ENCODE measurements at regions of chr11 and their contacts with region 1.

Region 1: GRCh38 chr11:128039140-128040021 is 548.0 kb downstream of the ETS1 start:
- DNase-seq: peak; percentile 25 to 83 (median 74)
- ATAC-seq: peak; percentile 97
- H3K4me3 ChIP-seq: peak overlapping the region; percentile 38
- H3K4me3 Mint-ChIP-seq: peak overlapping the region in 9 of 10 donors; percentile 61 to 79 (median 70)
- H3K27ac ChIP-seq: peak overlapping the region; percentile 49
- H3K27ac Mint-ChIP-seq: peak overlapping the region in 8 of 9 donors; percentile 71 to 94 (median 90)
- H3K4me1 ChIP-seq: peaks cover 68 to 74% of the 10 kb centered on the region in 2 donors
- H3K4me1 Mint-ChIP-seq: peaks cover 25 to 56% (median 41%) of the 10 kb centered on the region in 7 donors
- H3K27me3 ChIP-seq: no peaks in the 10 kb centered on the region
- H3K27me3 Mint-ChIP-seq: peaks cover 0 to 3% (median 0%) of the 10 kb centered on the region in 5 donors

Region 2: GRCh38 chr11:127816962-127817361 is 222.4 kb before region 1 on chr11:
- CTCF ChIA-PET with region 1: no interaction called
- POLR2A ChIA-PET with region 1: no interaction called
- intact Hi-C with region 1: no loop called
- DNase-seq: no peak
- ATAC-seq: no peak
- H3K4me3 ChIP-seq: no peak overlapping the region
- H3K4me3 Mint-ChIP-seq: peak overlapping the region in 1 of 10 donors; percentile 11
- H3K27ac ChIP-seq: no peak overlapping the region
- H3K27ac Mint-ChIP-seq: no peak overlapping the region
- H3K4me1 ChIP-seq: no peaks in the 10 kb centered on the region
- H3K4me1 Mint-ChIP-seq: peaks cover 0 to 2% (median 0%) of the 10 kb centered on the region in 7 donors
- H3K27me3 ChIP-seq: no peaks in the 10 kb centered on the region
- H3K27me3 Mint-ChIP-seq: peaks cover 2 to 25% (median 7%) of the 10 kb centered on the region in 5 donors

Region 3: DNA sequence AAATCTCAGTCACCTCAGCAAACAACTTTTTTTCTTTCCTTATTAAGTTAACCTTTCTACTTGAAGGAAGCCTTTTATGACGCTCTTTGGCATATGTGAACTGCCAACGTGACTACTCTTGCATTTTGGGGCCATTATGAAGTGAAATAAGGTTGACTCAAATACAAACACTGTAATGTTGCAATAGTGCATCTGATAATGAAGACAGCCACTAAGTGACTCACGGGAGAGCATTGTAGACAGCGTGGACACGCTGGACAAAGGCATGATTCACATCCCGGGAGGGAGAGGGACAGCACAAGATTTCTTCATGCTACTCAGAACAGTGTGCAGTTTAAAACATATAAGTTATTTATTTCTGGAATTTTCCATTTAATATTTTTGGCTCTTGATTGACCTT is 12.8 kb before region 1 on chr11:
- CTCF ChIA-PET with region 1: interaction called, 10 read pairs
- POLR2A ChIA-PET with region 1: no interaction called
- intact Hi-C with region 1: loop called in 1 of 2 experiments (anchors 1 kb)
- DNase-seq: no peak
- ATAC-seq: peak; percentile 34
- H3K4me3 ChIP-seq: no peak overlapping the region
- H3K4me3 Mint-ChIP-seq: no peak overlapping the region
- H3K27ac ChIP-seq: no peak overlapping the region
- H3K27ac Mint-ChIP-seq: peak overlapping the region in 1 of 9 donors; percentile 12
- H3K4me1 ChIP-seq: peaks cover 0 to under 1% of the 10 kb centered on the region in 2 donors
- H3K4me1 Mint-ChIP-seq: peaks cover 0 to 5% (median 3%) of the 10 kb centered on the region in 7 donors
- H3K27me3 ChIP-seq: no peaks in the 10 kb centered on the region
- H3K27me3 Mint-ChIP-seq: peaks cover 0 to 37% (median 2%) of the 10 kb centered on the region in 5 donors

Region 4: GRCh38 chr11:128157423-128158298 is 118.3 kb after region 1 on chr11:
- CTCF ChIA-PET with region 1: interaction called, 53 read pairs
- POLR2A ChIA-PET with region 1: interaction called, 6 read pairs
- intact Hi-C with region 1: loop called (anchors 2 kb)
- DNase-seq: peak in 8 of 9 donors; percentile 44 to 82 (median 74)
- ATAC-seq: peak; percentile 96
- H3K4me3 ChIP-seq: peak overlapping the region; percentile 33
- H3K4me3 Mint-ChIP-seq: peak overlapping the region in 9 of 10 donors; percentile 64 to 87 (median 77)
- H3K27ac ChIP-seq: peak overlapping the region; percentile 4
- H3K27ac Mint-ChIP-seq: peak overlapping the region in 7 of 9 donors; percentile 4 to 86 (median 58)
- H3K4me1 ChIP-seq: no peaks in the 10 kb centered on the region
- H3K4me1 Mint-ChIP-seq: peaks cover 0 to 10% (median 4%) of the 10 kb centered on the region in 7 donors
- H3K27me3 ChIP-seq: no peaks in the 10 kb centered on the region
- H3K27me3 Mint-ChIP-seq: peaks cover 0 to 28% (median 0%) of the 10 kb centered on the region in 5 donors

Region 5: DNA sequence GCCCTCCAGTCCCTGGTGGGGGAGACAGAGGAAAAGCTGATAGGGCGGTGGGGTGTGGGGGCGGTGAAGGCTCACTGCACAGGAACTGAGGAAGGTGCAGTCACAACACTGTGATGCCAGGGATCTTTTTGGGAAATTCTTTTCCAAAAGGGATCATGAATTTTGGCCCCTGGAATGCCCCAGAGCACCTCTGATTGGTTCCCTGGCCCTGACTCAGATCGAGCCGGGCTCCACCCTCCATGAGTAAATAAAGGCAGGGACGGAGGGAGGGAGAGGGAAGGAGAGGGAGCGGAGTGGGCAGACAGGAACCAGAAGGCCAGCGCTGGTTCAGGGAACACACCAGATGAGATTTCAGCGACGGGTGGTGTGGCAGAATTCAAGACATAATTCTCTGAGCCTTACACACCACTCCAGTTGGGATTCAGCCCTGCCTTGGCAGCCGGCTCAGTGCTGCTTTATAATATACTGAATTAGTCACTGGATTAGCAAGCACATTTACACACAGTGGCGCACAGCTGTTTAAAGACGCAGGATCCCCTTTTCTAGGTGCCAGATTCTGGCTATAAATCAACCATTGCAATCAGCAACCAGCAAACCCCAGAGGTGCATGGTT is 467.7 kb after region 1 on chr11:
- CTCF ChIA-PET with region 1: no interaction called
- POLR2A ChIA-PET with region 1: interaction called, 4 read pairs
- intact Hi-C with region 1: loop called in 1 of 2 experiments (anchors 5 kb)
- DNase-seq: peak in 1 of 9 donors; percentile 60
- ATAC-seq: no peak
- H3K4me3 ChIP-seq: peak overlapping the region; percentile 96
- H3K4me3 Mint-ChIP-seq: peak overlapping the region; percentile 85 to 100 (median 98)
- H3K27ac ChIP-seq: peak overlapping the region; percentile 97
- H3K27ac Mint-ChIP-seq: peak overlapping the region; percentile 87 to 99 (median 97)
- H3K4me1 ChIP-seq: peaks cover 89 to 91% of the 10 kb centered on the region in 2 donors
- H3K4me1 Mint-ChIP-seq: peaks cover 70 to 98% (median 92%) of the 10 kb centered on the region in 7 donors
- H3K27me3 ChIP-seq: no peaks in the 10 kb centered on the region
- H3K27me3 Mint-ChIP-seq: no peaks in the 10 kb centered on the region

Region 6: DNA sequence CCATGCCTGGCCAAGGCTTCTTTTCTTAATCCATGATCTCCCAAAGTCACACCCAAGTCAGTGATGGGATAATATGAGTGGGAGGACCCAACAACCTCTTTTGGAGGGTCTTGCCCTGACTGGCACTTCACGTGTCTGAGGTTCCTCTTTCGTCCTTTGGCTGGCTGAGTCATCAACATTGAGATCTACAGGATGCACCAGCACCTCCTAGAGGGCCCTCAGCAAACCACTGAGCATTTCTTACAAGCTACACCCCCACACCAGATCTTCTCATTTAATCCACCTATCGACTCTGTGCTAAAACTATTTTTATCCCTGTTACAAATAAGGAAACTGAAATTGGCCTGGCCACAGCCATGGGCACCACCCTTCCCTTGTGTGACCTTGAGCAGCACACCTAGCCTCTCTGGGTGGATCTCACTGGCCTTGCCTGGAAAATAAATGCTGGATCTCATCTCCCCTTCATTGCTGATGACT is 717.9 kb after region 1 on chr11:
- CTCF ChIA-PET with region 1: no interaction called
- POLR2A ChIA-PET with region 1: no interaction called
- intact Hi-C with region 1: loop called in 1 of 2 experiments (anchors 10 kb)
- DNase-seq: peak; percentile 27 to 74 (median 61)
- ATAC-seq: peak; percentile 96
- H3K4me3 ChIP-seq: no peak overlapping the region
- H3K4me3 Mint-ChIP-seq: peak overlapping the region in 8 of 10 donors; percentile 9 to 62 (median 40)
- H3K27ac ChIP-seq: no peak overlapping the region
- H3K27ac Mint-ChIP-seq: peak overlapping the region; percentile 43 to 92 (median 84)
- H3K4me1 ChIP-seq: peaks cover 36 to 49% of the 10 kb centered on the region in 2 donors
- H3K4me1 Mint-ChIP-seq: peaks cover 70 to 96% (median 89%) of the 10 kb centered on the region in 7 donors
- H3K27me3 ChIP-seq: no peaks in the 10 kb centered on the region
- H3K27me3 Mint-ChIP-seq: no peaks in the 10 kb centered on the region

Region 7: DNA sequence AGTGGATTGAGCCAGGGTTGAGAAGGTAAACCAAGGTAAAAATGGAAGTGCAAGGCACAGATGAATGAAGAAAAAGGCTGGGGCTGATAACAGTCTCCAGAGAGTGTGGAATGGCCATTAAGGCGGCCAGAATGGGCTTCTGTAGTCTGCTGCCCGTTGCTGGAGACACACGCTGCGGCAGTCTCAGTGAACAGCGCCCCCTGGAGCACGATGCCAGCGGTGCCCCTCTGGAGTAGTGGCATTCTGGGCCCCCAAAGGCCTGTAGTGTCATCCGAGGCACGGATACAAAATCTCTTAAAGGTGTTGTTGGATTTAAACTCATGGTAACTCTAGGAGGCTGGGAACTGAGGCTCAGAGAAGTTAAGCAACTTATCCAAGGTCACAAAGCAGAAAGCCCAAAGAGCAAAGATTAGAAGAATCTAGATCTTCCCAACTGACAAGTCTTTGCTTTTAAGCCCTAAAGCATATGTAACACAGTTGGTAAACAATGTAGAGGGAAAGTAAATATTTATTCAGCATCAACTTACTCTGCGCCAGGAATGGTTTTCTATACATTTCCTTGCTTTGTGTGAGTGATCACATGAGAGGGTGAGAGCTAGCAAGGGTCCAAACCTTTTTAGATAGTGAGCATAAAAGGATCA is 809.6 kb after region 1 on chr11:
- CTCF ChIA-PET with region 1: no interaction called
- POLR2A ChIA-PET with region 1: interaction called, 4 read pairs
- intact Hi-C with region 1: loop called in 1 of 2 experiments (anchors 5 kb)
- DNase-seq: peak in 6 of 9 donors; percentile 30 to 61 (median 56)
- ATAC-seq: peak; percentile 83
- H3K4me3 ChIP-seq: no peak overlapping the region
- H3K4me3 Mint-ChIP-seq: no peak overlapping the region
- H3K27ac ChIP-seq: no peak overlapping the region
- H3K27ac Mint-ChIP-seq: peak overlapping the region in 3 of 9 donors; percentile 18 to 82 (median 54)
- H3K4me1 ChIP-seq: peaks cover 15 to 21% of the 10 kb centered on the region in 2 donors
- H3K4me1 Mint-ChIP-seq: peaks cover 22 to 39% (median 30%) of the 10 kb centered on the region in 7 donors
- H3K27me3 ChIP-seq: no peaks in the 10 kb centered on the region
- H3K27me3 Mint-ChIP-seq: peaks cover 0 to 2% (median 0%) of the 10 kb centered on the region in 5 donors

Region 8: GRCh38 chr11:128965485-128965884 is 926.1 kb after region 1 on chr11:
- CTCF ChIA-PET with region 1: no interaction called
- POLR2A ChIA-PET with region 1: no interaction called
- intact Hi-C with region 1: loop called in 1 of 2 experiments (anchors 10 kb)
- DNase-seq: no peak
- ATAC-seq: peak; percentile 44
- H3K4me3 ChIP-seq: no peak overlapping the region
- H3K4me3 Mint-ChIP-seq: peak overlapping the region in 1 of 10 donors; percentile 70
- H3K27ac ChIP-seq: no peak overlapping the region
- H3K27ac Mint-ChIP-seq: peak overlapping the region in 1 of 9 donors; percentile 51
- H3K4me1 ChIP-seq: peaks cover 0 to 5% of the 10 kb centered on the region in 2 donors
- H3K4me1 Mint-ChIP-seq: peaks cover 0 to 47% (median 7%) of the 10 kb centered on the region in 7 donors
- H3K27me3 ChIP-seq: no peaks in the 10 kb centered on the region
- H3K27me3 Mint-ChIP-seq: no peaks in the 10 kb centered on the region

Region 9: GRCh38 chr11:129323896-129324512 is 1284.6 kb after region 1 on chr11:
- CTCF ChIA-PET with region 1: no interaction called
- POLR2A ChIA-PET with region 1: no interaction called
- intact Hi-C with region 1: no loop called
- DNase-seq: no peak
- ATAC-seq: peak; percentile 76
- H3K4me3 ChIP-seq: no peak overlapping the region
- H3K4me3 Mint-ChIP-seq: no peak overlapping the region
- H3K27ac ChIP-seq: no peak overlapping the region
- H3K27ac Mint-ChIP-seq: no peak overlapping the region
- H3K4me1 ChIP-seq: no peaks in the 10 kb centered on the region
- H3K4me1 Mint-ChIP-seq: peaks cover 0 to 5% (median 0%) of the 10 kb centered on the region in 7 donors
- H3K27me3 ChIP-seq: no peaks in the 10 kb centered on the region
- H3K27me3 Mint-ChIP-seq: peaks cover 0 to 24% (median 4%) of the 10 kb centered on the region in 5 donors